Naive thymus-derived CD8-positive, alpha-beta T cell (primary cell): ENCODE measurements at regions of chr20 and their contacts with region 1.

Region 1: GRCh38 chr20:1674361-1674760 is 16.8 kb upstream of the SIRPG start:
- DNase-seq: peak in 8 of 10 donors; percentile 17 to 73 (median 39)
- ATAC-seq: peak; percentile 77 to 82
- H3K4me3 Mint-ChIP-seq: peak overlapping the region; percentile 51 to 87 (median 78)
- H3K27ac Mint-ChIP-seq: peak overlapping the region; percentile 84 to 99 (median 96)
- H3K4me1 Mint-ChIP-seq: peaks cover 67 to 100% (median 99%) of the 10 kb centered on the region in 4 donors
- H3K27me3 Mint-ChIP-seq: no peaks in the 10 kb centered on the region

Region 2: DNA sequence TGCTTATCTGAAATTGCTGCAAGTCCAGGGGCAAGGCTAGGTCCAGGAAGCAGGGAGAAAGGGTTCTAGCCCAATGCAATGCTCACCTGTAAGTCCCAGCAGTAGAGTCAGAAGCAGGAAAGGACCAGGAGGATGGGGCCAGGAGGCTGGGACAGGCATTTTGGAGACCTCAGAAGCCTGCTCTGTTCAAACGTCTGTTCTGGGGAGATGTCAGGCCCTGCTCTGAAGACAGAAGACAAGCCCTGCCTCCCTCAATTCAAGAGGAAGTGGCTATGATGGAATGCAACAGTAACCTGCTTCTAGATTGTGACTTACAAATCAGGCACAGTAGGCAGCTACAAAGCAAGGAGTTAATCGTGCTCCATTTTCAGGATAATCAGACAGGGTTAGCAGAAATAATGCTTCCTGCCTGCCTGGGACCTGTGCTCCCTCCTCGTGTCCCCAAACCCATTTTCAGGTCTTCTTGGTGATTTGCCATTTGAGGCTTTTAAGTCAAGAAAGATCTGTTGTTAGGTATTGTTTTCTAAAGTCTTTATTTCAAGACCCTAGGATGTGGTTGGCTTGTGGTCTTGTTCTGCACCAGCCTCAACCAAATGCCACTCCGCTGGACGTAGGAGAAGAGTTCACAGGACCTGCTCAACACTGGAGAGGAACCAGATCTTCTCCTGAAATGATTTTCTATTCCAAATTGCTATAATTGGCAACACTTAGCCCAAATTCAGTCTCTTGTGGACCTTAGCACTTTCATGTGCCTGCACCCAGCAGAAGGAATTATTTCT is 16.6 kb before region 1 on chr20 and contains the start of gene SIRPG:
- POLR2A ChIA-PET with region 1: interaction called, 60 read pairs
- DNase-seq: peak in 5 of 10 donors; percentile 34 to 68 (median 51)
- ATAC-seq: peak; percentile 60 to 73
- H3K4me3 Mint-ChIP-seq: peak within 1 kb of the TSS; percentile 83 to 99 (median 90)
- H3K27ac Mint-ChIP-seq: peak within 1 kb of the TSS; percentile 86 to 99 (median 93)
- H3K4me1 Mint-ChIP-seq: peaks cover 63 to 97% (median 92%) of the 10 kb centered on the region in 4 donors
- H3K27me3 Mint-ChIP-seq: no peaks in the 10 kb centered on the region
- polyA plus RNA-seq, gene SIRPG: 165 to 246 (median 187) TPM

Region 3: DNA sequence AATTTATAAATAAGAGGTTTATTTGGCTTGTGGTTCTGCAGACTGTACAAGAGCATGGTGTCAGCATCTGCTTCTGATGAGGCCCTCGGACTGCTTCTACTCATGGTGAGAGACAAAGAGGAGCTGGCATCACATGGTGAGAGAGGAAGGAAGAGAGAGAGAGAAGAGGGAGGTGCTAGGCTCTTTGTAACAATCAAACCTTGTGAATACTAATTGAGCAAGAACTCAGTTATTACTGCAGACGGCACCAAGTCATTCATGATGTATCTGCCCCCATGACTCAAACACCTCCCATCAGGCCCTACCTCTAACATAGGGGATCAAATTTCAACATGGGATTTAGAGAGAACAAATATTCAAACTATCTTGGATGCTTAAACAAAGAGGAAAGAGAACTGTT is 10.4 kb before region 1 on chr20:
- POLR2A ChIA-PET with region 1: interaction called, 60 read pairs
- DNase-seq: no peak
- ATAC-seq: peak in 1 of 2 donors; percentile 18
- H3K4me3 Mint-ChIP-seq: peak overlapping the region; percentile 66 to 99 (median 82)
- H3K27ac Mint-ChIP-seq: peak overlapping the region; percentile 75 to 99 (median 93)
- H3K4me1 Mint-ChIP-seq: peaks cover 59 to 98% (median 97%) of the 10 kb centered on the region in 4 donors
- H3K27me3 Mint-ChIP-seq: no peaks in the 10 kb centered on the region

Region 4: GRCh38 chr20:1685304-1686052 is 11.1 kb after region 1 on chr20:
- POLR2A ChIA-PET with region 1: interaction called, 44 read pairs
- DNase-seq: no peak
- ATAC-seq: peak; percentile 65 to 69
- H3K4me3 Mint-ChIP-seq: peak overlapping the region; percentile 90 to 98 (median 92)
- H3K27ac Mint-ChIP-seq: peak overlapping the region; percentile 88 to 97 (median 95)
- H3K4me1 Mint-ChIP-seq: peaks cover 36 to 86% (median 61%) of the 10 kb centered on the region in 4 donors
- H3K27me3 Mint-ChIP-seq: no peaks in the 10 kb centered on the region

Region 5: DNA sequence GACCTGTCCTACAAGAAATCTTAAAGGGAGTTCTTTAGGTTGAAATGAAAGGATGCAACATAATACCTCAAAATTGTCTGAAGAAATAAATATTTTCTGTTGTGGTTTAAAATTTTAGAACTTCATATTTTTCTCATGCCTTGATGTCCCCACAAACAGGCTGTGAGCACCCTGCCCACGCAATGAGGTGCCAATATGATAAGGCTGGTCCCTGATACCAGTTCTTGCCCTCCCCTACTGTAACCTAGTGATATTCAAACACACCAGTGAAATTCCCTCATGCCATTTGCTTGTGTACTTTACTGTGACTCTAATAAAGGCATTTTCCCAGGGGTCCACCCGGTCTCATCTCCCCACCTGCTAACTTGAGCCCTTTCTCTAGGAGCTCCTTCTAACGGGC is 50.5 kb after region 1 on chr20:
- POLR2A ChIA-PET with region 1: no interaction called
- DNase-seq: no peak
- ATAC-seq: no peak
- H3K4me3 Mint-ChIP-seq: no peak overlapping the region
- H3K27ac Mint-ChIP-seq: no peak overlapping the region
- H3K4me1 Mint-ChIP-seq: peaks cover 3 to 14% (median 7%) of the 10 kb centered on the region in 4 donors
- H3K27me3 Mint-ChIP-seq: no peaks in the 10 kb centered on the region